ENCODE measurements at regions of chr16 and their contacts with region 1.

Region 1: GRCh38 chr16:30370444-30371247 is at the start of gene TBC1D10B:
- DNase-seq: peak; percentile 100
- H3K4me3 ChIP-seq: peak within 1 kb of the TSS; percentile 85
- CTCF ChIP-seq: peak; percentile 13

Region 2: GRCh38 chr16:30355144-30355894 is 15.3 kb before region 1 on chr16 and contains the start of gene CD2BP2:
- CTCF ChIA-PET with region 1: interaction called, 5 read pairs
- POLR2A ChIA-PET with region 1: interaction called, 12 read pairs
- DNase-seq: peak; percentile 97
- H3K4me3 ChIP-seq: peak within 1 kb of the TSS; percentile 97
- CTCF ChIP-seq: peak; percentile 7